ENCODE measurements at regions of chr21 and their contacts with region 1.

Region 1: DNA sequence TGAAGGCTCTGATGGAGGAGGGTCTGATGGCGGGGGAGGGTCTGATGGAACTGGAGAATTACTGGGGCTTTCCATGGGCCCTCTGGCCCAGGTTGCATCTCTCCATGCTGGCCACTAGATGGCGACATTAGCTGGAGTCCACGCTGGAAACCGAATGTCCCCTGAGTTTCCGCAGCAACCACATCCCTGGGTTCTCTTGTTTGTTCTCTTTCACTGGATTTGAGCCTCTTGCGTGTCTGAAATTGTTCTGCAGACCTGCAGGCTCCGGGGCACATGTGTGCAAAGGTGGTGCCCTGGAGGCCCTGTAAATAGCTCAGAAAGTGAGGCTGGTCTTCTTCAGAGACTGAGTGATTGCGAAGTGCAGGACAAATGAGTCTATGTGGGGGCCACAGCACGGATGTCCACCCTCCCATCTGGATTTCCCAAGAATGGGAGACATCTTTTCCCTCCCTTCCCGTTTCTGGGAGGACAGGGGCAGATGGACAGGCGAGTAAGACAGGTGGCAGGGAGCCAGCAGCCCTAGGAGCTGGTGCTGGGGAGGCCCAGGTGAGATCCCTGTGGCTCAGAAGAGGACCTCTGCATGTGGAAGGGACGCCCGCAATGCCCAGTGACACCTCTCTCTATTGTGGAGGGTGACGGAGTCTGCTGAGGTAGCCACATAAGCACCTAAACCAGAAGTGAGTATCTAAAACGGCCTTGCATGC is 73.2 kb upstream of the ABCG1 start:
- DNase-seq: peak in 1 of 3 donors; percentile 41
- ATAC-seq: peak; percentile 60 to 67
- H3K4me3 ChIP-seq: no peak overlapping the region
- H3K27ac ChIP-seq: no peak overlapping the region
- H3K4me1 ChIP-seq: no peaks in the 10 kb centered on the region
- H3K27me3 ChIP-seq: no peaks in the 10 kb centered on the region

Region 2: DNA sequence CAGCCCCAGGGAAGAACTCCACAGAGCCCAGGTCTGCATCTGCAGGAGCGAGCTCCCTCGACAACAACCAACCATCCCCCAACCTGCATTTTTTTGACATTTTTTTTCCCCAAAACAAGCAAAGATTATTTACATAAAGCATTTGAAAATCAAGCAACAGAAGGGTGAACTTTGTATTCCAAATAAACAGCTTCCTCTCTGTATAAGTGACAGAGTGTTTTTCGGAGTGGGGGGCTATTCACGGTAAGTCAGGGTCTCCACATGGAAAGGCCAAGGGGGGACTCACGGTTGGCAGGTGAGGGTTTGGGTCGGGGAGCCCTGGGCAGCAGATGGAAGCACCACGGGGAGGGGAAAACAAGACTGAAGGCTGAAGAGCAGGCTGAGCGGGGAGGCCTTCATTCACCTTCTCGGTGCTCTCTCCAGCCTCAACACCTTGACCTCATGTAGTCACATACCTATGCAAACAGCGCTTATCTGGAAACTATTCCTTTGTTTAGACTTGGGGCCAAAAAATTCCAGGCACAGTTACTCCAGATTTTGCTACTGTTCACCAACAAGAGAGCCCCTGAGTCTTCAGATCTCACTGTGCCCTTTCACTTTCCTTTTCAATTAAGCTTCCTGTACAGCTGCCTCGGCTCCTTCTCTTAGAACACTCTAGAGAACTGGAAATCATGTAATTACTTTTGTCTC is 219.5 kb before region 1 on chr21:
- intact Hi-C with region 1: no loop called
- DNase-seq: peak in 1 of 3 donors; percentile 52
- ATAC-seq: peak; percentile 69 to 72
- H3K4me3 ChIP-seq: peak overlapping the region; percentile 41
- H3K27ac ChIP-seq: peak overlapping the region; percentile 93
- H3K4me1 ChIP-seq: no peaks in the 10 kb centered on the region
- H3K27me3 ChIP-seq: no peaks in the 10 kb centered on the region

Region 3: DNA sequence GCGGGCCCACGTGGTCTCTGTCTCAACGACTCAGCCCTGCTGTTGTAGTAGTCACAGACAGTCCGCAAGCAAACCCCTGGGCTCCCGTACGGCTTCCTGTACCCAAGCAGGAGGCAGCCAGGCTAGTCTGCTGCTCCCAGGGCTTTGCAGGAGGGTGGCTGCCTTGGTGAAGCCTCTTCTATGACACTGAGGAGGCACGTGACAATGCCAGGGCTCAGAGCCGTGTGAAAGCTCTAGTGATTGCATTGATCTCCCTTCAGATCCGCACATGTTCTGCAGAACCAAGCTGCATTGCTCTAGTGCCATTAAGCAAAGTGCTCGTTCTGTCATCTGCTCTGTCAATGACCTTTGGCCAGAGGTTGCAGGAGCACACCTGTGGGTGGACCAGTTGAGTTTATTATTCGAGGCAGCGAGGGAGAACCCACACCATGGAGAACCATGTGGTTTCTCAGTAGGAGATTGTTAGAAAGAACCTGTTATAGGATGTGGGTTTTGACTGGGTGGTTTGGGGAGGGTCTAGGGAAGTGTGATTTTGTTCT is 56.6 kb before region 1 on chr21:
- intact Hi-C with region 1: no loop called
- DNase-seq: peak in 1 of 3 donors; percentile 3
- ATAC-seq: no peak
- H3K4me3 ChIP-seq: no peak overlapping the region
- H3K27ac ChIP-seq: no peak overlapping the region
- H3K4me1 ChIP-seq: no peaks in the 10 kb centered on the region
- H3K27me3 ChIP-seq: no peaks in the 10 kb centered on the region

Region 4: DNA sequence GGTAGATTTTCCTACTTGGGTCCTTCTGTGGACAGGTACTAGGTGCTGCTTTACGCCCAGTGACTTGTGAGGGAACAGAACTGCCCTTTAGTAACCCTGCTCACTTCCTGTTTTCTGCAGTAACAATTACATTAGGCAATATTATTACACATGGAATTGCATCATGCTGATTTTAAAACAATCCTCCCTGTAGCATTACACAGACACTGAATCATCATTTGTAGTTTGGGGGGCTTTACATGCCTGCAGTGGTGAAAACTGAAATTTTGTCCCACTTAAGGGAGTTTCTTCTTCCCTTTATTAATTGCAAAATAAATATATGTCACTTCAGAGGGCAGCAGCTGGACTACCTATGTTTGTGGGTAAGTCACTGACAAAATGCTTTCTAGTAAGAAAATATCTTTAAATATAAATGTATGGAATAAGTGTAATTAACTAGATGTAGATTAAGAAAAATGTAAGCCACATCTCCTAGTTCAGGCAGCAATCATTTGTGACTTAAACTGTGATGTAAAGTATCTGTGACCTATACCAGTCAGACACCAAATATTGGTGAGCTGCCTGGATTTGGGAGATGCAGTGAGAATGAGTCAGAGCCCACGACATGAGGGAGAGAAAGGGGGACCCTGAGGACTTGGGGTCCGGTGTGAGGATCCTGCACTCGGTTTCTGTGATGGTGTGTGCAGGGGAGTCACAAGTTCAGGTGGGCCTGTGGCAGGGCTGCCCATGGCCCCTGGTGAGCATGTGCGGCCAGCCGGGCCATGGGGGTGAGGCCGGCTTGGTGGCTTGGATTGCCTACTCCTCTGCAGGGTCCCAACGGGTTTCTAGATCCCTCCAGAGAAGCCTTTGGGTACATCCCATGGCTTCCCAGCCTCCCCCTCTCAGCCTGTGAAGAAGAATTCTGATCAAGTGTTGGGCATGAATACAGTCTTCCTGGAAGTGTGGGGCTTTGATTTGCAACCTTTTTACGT is 54.1 kb after region 1 on chr21:
- intact Hi-C with region 1: no loop called
- DNase-seq: no peak
- ATAC-seq: peak; percentile 76 to 82
- H3K4me3 ChIP-seq: no peak overlapping the region
- H3K27ac ChIP-seq: no peak overlapping the region
- H3K4me1 ChIP-seq: no peaks in the 10 kb centered on the region
- H3K27me3 ChIP-seq: no peaks in the 10 kb centered on the region

Region 5: DNA sequence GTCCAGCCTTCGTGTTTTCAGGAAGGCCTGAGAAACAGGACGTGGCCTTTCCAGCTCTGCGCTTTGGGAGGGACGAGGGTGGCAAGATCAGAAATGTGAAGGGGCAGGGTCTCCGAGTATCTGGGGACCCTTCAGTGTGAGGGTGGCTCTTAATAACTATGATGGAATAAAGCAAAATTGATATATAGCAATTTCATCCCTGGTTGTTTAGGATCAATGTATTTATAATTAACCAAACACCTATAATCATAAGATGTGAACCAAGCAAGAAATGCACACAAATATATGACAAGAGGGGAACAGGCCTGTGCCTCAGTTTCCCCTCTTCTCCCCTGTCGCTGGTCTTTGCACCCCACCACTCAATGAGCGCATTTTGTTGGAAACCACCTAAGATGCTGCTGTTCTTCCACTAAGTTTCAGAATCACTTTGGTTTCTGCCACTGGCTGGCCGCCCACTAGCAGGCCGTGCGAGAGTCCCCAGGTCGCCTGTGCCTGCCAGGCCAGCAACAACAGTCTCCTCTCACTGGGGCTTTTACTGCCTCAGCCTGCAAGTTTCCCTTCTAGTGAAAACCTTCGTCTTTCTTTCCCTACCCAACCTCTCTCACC is 294.6 kb after region 1 on chr21:
- intact Hi-C with region 1: loop called in 3 of 4 experiments (anchors 5 to 10 kb)
- DNase-seq: no peak
- ATAC-seq: no peak
- H3K4me3 ChIP-seq: no peak overlapping the region
- H3K27ac ChIP-seq: no peak overlapping the region
- H3K4me1 ChIP-seq: no peaks in the 10 kb centered on the region
- H3K27me3 ChIP-seq: no peaks in the 10 kb centered on the region

Region 6: GRCh38 chr21:42449296-42449927 is 303.7 kb after region 1 on chr21:
- intact Hi-C with region 1: loop called (anchors 5 to 10 kb)
- DNase-seq: no peak
- ATAC-seq: no peak
- H3K4me3 ChIP-seq: no peak overlapping the region
- H3K27ac ChIP-seq: no peak overlapping the region
- H3K4me1 ChIP-seq: no peaks in the 10 kb centered on the region
- H3K27me3 ChIP-seq: no peaks in the 10 kb centered on the region

Region 7: GRCh38 chr21:42454786-42455580 is 309.3 kb after region 1 on chr21:
- intact Hi-C with region 1: loop called in 1 of 4 experiments (anchors 5 kb)
- DNase-seq: no peak
- ATAC-seq: no peak
- H3K4me3 ChIP-seq: no peak overlapping the region
- H3K27ac ChIP-seq: no peak overlapping the region
- H3K4me1 ChIP-seq: no peaks in the 10 kb centered on the region
- H3K27me3 ChIP-seq: no peaks in the 10 kb centered on the region

Region 8: GRCh38 chr21:43639470-43640178 is 1493.9 kb after region 1 on chr21:
- intact Hi-C with region 1: no loop called
- DNase-seq: no peak
- ATAC-seq: no peak
- H3K4me3 ChIP-seq: no peak overlapping the region
- H3K27ac ChIP-seq: no peak overlapping the region
- H3K4me1 ChIP-seq: no peaks in the 10 kb centered on the region
- H3K27me3 ChIP-seq: no peaks in the 10 kb centered on the region